ENCODE measurements at regions of chr10 and their contacts with region 1.

Region 1: DNA sequence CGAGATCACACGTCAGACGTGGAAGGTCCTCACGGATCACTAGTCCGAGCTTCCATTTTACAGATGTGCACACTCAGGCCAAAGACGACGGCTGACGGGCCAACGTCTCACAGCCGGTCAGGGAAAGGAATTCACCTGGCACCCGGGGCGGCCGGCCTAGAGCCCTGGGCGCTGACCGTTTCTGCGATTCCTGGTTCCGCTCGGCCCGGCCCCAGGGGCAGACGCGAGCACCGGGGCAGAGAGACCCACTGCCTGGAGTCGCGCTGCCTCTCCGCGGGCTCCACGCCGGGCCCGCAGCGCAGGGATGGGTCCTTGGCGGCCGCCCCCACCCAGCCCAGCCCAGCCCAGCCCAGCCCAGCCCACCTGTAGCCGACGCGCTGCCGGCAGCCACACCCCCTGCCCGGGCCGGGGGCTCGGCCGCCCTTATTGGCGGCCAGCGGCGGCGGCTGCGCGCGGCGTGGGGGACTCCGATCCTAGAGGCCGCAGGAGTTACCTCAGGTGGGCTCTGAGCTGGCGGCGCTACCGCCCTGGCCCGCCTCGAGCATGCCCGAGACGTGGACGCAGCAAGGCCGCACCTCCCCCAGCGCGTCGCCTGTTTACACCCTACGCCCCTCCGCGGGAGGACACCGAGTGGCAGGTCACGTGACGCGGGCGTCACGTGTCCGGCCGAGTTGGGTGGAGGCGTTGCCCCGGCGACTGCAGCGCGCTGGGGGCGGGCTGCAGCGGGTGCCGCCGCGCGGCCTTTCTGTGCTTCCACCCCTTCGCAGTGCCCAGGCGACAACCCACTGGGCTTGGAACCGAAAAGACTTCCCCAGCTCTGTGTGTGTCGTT is 78.1 kb downstream of the ZFAND4 start:
- DNase-seq: peak; percentile 84 to 95 (median 90)
- H3K4me3 ChIP-seq: peak overlapping the region; percentile 57 to 98 (median 89)
- H3K27ac ChIP-seq: peak overlapping the region in 50 of 59 donors; percentile 2 to 87 (median 66)
- H3K27me3 ChIP-seq: peaks cover 0 to under 1% (median 0%) of the 10 kb centered on the region in 45 donors
- CTCF ChIP-seq: peak in 53 of 56 donors; percentile 16 to 77 (median 51)

Region 2: DNA sequence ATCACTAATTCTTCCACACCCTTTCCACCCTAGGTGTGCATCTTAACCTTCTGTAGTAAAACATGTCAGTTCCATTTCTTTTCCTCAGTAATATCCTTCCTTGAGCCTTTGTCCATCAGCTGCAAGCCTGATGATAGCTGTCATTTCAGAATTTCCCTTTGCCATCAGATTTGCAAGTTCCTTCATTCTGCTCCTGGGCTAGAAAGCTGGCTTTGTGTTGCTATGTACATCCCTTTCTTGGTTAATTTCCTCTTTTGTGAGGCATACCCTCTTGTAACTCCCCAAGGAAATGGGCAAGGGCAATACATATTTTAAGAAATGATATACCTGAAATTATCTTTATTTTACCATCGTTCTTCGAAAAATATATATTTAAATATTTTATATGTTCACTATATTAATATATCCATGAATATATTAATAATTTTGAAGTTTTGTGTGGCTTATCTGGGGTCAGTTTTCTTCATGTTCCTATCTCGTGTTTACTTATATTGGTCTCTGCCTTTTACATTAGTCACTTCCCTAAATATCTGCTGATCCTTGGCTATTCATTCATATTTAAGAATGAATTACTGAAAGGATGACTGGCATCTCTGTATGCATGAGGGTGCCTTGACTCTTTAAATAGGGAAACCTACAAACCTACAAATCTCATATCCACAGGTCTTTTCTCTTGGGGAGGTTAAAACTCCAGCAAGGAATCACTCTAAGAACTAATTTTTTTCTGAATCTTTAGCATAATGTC is 450.0 kb before region 1 on chr10:
- intact Hi-C with region 1: no loop called
- DNase-seq: no peak
- H3K4me3 ChIP-seq: no peak overlapping the region
- H3K27ac ChIP-seq: no peak overlapping the region
- H3K27me3 ChIP-seq: peaks cover 0 to 4% (median 0%) of the 10 kb centered on the region in 45 donors
- CTCF ChIP-seq: no peak

Region 3: GRCh38 chr10:45249978-45250693 is 344.4 kb before region 1 on chr10:
- intact Hi-C with region 1: loop called in 1 of 2 experiments (anchors 10 kb)
- DNase-seq: peak in 2 of 10 donors; percentile 10 to 15
- H3K4me3 ChIP-seq: peak overlapping the region in 46 of 59 donors; percentile 3 to 49 (median 28)
- H3K27ac ChIP-seq: no peak overlapping the region
- H3K27me3 ChIP-seq: peaks cover 0 to 3% (median 0%) of the 10 kb centered on the region in 45 donors
- CTCF ChIP-seq: peak; percentile 62 to 87 (median 77)

Region 4: DNA sequence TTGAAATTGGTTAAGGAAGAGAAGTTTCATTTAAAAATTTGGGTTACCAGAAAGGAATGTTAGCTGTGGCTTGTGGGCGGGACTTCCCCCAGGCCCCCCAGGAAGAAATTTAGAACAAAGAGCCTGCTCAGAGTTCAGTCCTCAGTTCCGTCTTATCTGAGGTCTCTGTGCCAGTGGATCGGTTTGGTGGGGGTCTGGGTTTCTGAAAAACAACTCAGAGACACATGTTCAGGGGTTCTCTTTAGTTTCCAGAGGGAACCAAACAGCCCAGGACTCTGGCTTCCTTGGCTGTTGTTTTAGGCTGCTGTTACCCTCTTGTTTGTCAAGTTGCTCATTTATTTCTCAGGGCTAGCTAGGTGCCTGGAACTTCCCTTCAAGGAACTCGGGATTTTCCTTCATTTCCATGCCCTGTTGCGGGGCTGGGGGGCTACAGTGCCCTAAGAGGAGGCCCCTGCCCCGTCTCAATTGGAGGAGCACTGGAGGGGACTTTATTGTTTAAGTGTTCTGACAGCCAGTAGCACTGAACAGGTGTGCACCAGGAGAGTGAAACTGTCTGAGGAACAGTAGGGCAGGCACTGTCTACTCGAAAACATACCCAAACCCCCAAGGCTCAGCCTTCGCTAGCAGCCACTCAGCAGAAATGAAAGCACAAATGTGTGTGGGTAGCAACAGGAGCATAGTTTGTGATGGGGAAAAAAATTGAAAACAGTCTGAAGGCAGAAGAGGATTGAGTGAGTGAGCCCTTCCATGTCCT is 160.6 kb before region 1 on chr10:
- intact Hi-C with region 1: no loop called
- DNase-seq: no peak
- H3K4me3 ChIP-seq: no peak overlapping the region
- H3K27ac ChIP-seq: no peak overlapping the region
- H3K27me3 ChIP-seq: peaks cover 0 to 14% (median 2%) of the 10 kb centered on the region in 45 donors
- CTCF ChIP-seq: no peak

Region 5: DNA sequence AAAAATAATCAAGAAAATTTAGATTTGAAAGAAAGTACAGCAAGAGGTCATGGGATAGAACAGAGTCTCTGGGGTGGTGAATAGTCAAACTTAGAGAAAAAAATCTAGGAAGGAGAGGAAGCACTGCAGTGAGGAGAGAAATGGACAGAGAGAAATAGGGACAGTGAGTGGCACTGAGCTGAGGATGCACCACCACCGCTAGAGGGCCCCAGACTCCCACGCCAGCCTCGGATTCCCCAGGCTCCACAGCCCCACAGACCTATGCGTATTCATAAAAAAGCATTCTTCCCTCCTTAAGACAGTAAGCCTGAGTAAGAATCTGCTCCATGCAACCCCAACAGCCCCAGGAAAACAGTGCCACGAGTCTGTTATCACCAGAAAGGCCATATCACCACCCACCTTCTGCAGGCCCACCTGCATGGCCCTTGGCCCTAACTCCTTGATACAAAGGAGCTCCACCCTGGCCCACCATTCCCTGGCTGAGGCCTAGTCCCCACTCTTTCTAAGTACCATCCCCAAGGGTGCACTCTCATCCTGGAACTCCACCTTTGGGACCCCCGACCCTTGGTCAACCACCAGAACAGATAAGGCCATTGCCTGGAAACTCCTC is 129.4 kb before region 1 on chr10:
- intact Hi-C with region 1: loop called (anchors 2 to 5 kb)
- DNase-seq: peak; percentile 71 to 89 (median 82)
- H3K4me3 ChIP-seq: peak overlapping the region in 2 of 59 donors; percentile 5 to 10
- H3K27ac ChIP-seq: peak overlapping the region in 9 of 59 donors; percentile 13 to 74 (median 40)
- H3K27me3 ChIP-seq: no peaks in the 10 kb centered on the region
- CTCF ChIP-seq: peak; percentile 75 to 96 (median 89)

Region 6: DNA sequence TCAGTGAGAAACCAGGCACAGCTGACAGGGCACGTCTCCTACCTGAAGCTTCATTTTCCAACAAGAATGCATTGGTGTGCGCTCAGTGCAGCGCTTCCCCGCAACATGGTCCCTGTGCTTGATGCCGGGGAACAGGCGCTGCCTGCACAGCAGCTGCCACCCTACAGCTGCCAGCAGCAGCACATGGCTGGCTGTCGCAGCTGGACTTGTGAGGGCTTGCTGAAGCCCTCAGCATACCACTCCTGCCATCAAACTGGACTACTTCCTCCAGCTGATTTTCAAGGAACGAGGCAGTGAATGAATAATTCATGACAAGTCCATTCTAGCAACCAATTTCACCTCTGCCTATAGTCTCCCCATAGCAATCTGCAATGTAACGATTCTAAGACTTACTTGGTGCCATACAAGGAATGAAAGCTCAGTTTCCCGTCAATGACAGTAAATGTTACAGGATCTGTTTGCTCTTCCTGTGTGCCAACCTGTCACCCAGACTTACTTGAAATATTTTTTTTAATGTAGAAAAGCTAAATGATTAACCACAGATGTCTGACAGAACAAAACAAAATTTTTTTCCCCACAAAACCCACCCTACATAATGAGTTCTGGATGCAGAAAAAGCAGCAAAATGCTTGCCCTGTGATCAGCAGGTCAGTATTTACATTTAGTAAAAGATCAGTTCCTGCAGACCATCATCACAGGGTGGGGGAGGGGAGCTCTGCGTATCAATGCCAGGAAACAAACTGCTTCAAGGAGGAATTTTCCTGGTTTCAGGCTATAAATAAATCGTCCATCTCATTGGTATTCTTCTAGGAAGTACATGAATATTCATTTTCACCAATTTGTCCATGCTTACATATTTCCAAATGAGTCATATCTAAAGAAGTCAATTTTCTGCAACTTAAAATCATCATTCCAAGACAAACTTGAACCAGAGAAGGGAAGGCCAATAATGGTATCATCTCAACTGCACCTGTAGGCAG is 79.9 kb before region 1 on chr10:
- intact Hi-C with region 1: loop called (anchors 5 to 10 kb)
- DNase-seq: peak; percentile 16 to 79 (median 68)
- H3K4me3 ChIP-seq: peak overlapping the region; percentile 0 to 59 (median 30)
- H3K27ac ChIP-seq: peak overlapping the region in 29 of 59 donors; percentile 2 to 73 (median 39)
- H3K27me3 ChIP-seq: no peaks in the 10 kb centered on the region
- CTCF ChIP-seq: no peak

Region 7: GRCh38 chr10:45672181-45673073 is 77.9 kb after region 1 on chr10 and contains the start of gene ZFAND4:
- intact Hi-C with region 1: loop called (anchors 2 to 10 kb)
- DNase-seq: peak; percentile 89 to 95 (median 94)
- H3K4me3 ChIP-seq: peak within 1 kb of the TSS; percentile 57 to 90 (median 79)
- H3K27ac ChIP-seq: peak within 1 kb of the TSS; percentile 22 to 93 (median 80)
- H3K27me3 ChIP-seq: peaks cover 0 to 4% (median 0%) of the 10 kb centered on the region in 45 donors
- CTCF ChIP-seq: peak; percentile 6 to 86 (median 62)
- total RNA-seq, gene ZFAND4: 7.6 to 23.3 (median 13.3) TPM

Measured in dorsolateral prefrontal cortex (tissue), 120 donors.